Naive thymus-derived CD8-positive, alpha-beta T cell (primary cell): ENCODE measurements at regions of chr17 and their contacts with region 1.

Region 1: GRCh38 chr17:14300575-14301278 is at the start of gene HS3ST3B1:
- DNase-seq: peak; percentile 95 to 100 (median 99)
- ATAC-seq: peak; percentile 80 to 82
- H3K4me3 Mint-ChIP-seq: peak within 1 kb of the TSS; percentile 88 to 99 (median 97)
- H3K27ac Mint-ChIP-seq: peak within 1 kb of the TSS; percentile 88 to 97 (median 95)
- H3K4me1 Mint-ChIP-seq: peaks cover 43 to 73% (median 66%) of the 10 kb centered on the region in 4 donors
- H3K27me3 Mint-ChIP-seq: peaks cover 14 to 34% (median 30%) of the 10 kb centered on the region in 5 donors
- polyA plus RNA-seq, gene HS3ST3B1: 9.2 to 12.7 (median 11.8) TPM

Region 2: DNA sequence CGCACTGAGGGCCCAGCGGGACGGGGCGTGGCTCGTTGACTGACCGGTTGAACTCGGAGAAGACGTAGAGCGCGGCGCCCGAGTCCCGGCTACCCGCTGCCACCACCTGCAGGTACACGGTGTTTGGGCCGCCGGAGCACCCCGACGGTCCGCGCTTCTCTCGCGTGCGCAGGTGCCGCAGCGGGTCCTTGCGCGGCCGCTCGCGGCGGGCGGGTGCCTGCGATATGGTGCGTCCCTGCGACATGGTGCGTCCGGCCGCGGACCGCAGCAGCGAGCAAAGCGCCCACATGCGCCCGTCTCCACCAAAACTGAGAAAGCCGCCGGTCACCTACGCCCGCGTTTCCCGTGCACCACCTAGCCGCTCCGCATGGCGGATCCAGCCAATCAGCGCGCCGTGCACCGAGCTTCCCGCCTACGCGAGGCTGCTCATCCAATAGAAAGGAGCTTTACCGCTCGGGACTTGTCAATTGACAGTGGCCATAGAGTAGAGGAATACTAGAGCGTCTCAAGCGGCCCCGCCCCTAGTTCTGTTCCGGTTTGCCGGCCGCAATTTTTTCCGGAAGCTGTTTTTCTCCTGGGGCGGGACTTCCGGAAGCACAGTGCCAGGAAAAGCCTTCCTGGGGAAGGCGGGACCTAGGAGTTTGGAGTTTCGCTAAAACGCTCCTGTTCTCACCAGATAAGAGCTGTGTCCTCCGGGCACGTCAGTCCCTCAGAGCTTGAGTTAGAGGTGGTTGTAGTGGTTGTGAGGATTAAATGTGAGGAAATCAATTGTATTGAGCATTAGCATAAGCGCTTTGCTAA is 1282.9 kb before region 1 on chr17 and contains the start of gene ELAC2:
- POLR2A ChIA-PET with region 1: interaction called, 10 read pairs
- DNase-seq: peak; percentile 84 to 97 (median 96)
- ATAC-seq: peak; percentile 99
- H3K4me3 Mint-ChIP-seq: peak within 1 kb of the TSS; percentile 94 to 99 (median 98)
- H3K27ac Mint-ChIP-seq: peak within 1 kb of the TSS; percentile 91 to 99 (median 97)
- H3K4me1 Mint-ChIP-seq: peaks cover 13 to 37% (median 35%) of the 10 kb centered on the region in 4 donors
- H3K27me3 Mint-ChIP-seq: no peaks in the 10 kb centered on the region
- polyA plus RNA-seq, gene ELAC2: 37.8 to 60.3 (median 46.1) TPM

Region 3: DNA sequence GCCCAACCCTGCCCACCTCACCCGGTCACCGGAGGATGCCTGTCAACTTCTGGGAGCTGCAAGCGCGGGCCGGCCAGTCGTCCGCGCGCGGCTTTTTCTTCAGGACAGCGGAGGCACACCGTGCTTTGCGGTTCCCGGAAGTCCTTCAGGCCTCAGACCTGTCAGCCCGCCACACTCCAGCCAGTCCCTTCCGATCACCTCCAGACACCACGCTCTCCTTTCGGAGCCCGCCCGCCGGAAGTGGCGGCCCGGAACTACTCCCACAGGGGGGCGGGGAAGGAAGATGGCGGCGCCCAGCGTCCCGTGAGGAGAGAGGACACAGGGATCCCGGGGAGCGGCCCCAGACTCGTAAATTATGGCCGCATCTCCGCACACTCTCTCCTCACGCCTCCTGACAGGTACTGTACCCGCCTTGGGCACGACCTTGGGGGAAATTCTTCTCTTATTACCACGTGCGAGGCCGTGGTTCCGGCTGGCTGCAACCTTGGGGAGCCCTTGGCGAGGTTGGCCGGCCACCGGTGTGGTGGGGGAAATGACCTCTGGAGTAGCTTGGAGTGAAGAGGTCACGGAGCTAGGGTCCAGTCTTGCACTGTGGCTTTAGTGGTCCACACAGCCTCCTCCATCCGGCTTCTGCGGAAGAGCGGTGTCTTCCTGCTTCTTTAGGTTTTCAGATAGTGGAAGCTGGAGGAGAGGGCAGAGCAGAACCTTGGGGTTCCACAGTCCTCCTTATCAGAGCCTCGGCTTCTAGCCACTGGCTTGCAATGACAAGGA is 231.3 kb before region 1 on chr17 and contains the start of gene COX10:
- POLR2A ChIA-PET with region 1: interaction called, 16 read pairs
- DNase-seq: peak; percentile 68 to 90 (median 77)
- ATAC-seq: peak; percentile 98
- H3K4me3 Mint-ChIP-seq: peak within 1 kb of the TSS; percentile 92 to 97 (median 94)
- H3K27ac Mint-ChIP-seq: peak within 1 kb of the TSS; percentile 87 to 97 (median 96)
- H3K4me1 Mint-ChIP-seq: peaks cover 27 to 58% (median 48%) of the 10 kb centered on the region in 4 donors
- H3K27me3 Mint-ChIP-seq: no peaks in the 10 kb centered on the region
- polyA plus RNA-seq, gene COX10: 18.5 to 24.5 (median 23.3) TPM

Region 4: DNA sequence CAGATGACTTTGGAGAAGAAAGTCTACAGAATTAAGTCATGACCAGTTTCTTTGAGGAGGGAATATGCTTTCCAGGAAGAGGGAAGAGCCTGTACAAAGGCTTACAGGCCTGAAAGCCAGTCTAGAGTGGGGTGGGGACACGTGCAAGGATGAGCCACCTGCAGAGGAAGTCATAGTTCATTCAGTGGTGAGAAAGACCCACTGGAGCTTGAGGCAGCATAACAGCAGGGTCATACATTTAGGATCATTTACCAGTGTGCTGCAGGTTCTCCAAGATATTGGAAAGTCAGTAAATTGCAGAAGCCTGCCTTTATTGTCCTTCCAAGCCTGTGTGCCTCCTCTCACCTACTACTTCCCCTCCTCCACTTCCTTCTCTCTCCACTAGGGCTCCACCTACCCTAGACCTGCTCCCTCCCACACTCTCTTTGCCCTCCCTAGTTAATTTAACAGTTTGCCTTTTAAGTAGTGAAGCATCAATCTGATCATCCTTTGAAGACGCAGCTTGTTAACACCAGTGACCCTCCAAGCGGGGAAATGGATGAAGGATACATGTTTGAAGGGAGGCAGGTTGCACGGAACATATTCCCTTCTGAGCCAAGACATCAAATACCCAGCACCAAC is 104.2 kb before region 1 on chr17:
- POLR2A ChIA-PET with region 1: interaction called, 91 read pairs
- DNase-seq: peak in 1 of 10 donors; percentile 33
- ATAC-seq: no peak
- H3K4me3 Mint-ChIP-seq: peak overlapping the region; percentile 50 to 90 (median 81)
- H3K27ac Mint-ChIP-seq: peak overlapping the region; percentile 92 to 99 (median 96)
- H3K4me1 Mint-ChIP-seq: peaks cover 52 to 91% (median 86%) of the 10 kb centered on the region in 4 donors
- H3K27me3 Mint-ChIP-seq: no peaks in the 10 kb centered on the region

Region 5: GRCh38 chr17:14203388-14203787 is 97.3 kb before region 1 on chr17:
- POLR2A ChIA-PET with region 1: interaction called, 91 read pairs
- DNase-seq: peak in 7 of 10 donors; percentile 32 to 76 (median 54)
- ATAC-seq: peak; percentile 41 to 51
- H3K4me3 Mint-ChIP-seq: peak overlapping the region; percentile 13 to 70 (median 44)
- H3K27ac Mint-ChIP-seq: peak overlapping the region; percentile 86 to 100 (median 92)
- H3K4me1 Mint-ChIP-seq: peaks cover 59 to 93% (median 87%) of the 10 kb centered on the region in 4 donors
- H3K27me3 Mint-ChIP-seq: no peaks in the 10 kb centered on the region

Region 6: DNA sequence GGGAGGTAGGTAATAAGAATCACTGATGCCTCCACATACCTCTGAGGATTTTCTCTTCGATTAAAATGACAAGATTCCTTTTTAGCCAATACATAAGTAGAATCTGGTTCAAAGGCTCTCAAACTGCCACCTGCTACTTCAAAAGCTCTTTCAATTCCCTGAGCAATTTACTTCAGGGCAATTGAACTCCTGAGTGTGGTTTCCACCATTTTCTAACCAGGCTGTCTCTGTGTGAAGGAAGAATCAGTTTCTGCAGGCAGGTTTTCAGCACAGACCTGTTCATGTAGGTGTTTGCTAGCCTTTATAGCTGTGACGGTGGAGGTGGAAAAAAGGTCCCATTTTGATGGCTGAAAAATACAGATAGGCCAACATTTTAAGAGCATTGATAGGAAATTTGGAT is 18.0 kb before region 1 on chr17:
- POLR2A ChIA-PET with region 1: no interaction called
- DNase-seq: no peak
- ATAC-seq: no peak
- H3K4me3 Mint-ChIP-seq: no peak overlapping the region
- H3K27ac Mint-ChIP-seq: no peak overlapping the region
- H3K4me1 Mint-ChIP-seq: peaks cover 0 to 7% (median 0%) of the 10 kb centered on the region in 4 donors
- H3K27me3 Mint-ChIP-seq: peaks cover 5 to 29% (median 14%) of the 10 kb centered on the region in 5 donors

Region 7: DNA sequence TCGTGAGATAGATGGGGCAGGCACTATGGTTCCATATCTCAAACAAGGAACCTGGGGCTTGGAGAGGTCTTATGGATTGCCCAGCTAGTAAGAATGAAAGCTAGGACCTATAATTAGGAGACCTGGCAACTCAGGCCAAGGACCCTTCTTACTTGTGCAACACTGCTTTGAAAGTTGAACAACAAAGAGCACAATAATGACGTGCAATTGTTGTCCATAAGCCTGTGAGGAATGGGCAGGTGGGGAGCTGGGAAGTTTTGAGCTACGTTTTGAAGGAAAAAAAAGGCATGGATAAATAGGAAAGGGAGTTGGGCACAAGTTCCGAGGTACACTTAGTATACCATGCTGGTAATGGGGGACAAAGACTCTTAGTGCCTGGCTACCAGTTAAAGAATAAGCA is 104.5 kb after region 1 on chr17:
- POLR2A ChIA-PET with region 1: interaction called, 24 read pairs
- DNase-seq: no peak
- ATAC-seq: no peak
- H3K4me3 Mint-ChIP-seq: peak overlapping the region in 5 of 10 donors; percentile 34 to 70 (median 51)
- H3K27ac Mint-ChIP-seq: peak overlapping the region in 8 of 10 donors; percentile 4 to 79 (median 44)
- H3K4me1 Mint-ChIP-seq: peaks cover 18 to 39% (median 30%) of the 10 kb centered on the region in 4 donors
- H3K27me3 Mint-ChIP-seq: no peaks in the 10 kb centered on the region

Region 8: GRCh38 chr17:14427900-14428647 is 127.3 kb after region 1 on chr17:
- POLR2A ChIA-PET with region 1: interaction called, 101 read pairs
- DNase-seq: peak; percentile 9 to 76 (median 54)
- ATAC-seq: peak; percentile 96 to 99
- H3K4me3 Mint-ChIP-seq: peak overlapping the region; percentile 69 to 91 (median 83)
- H3K27ac Mint-ChIP-seq: peak overlapping the region; percentile 82 to 100 (median 94)
- H3K4me1 Mint-ChIP-seq: peaks cover 37 to 68% (median 64%) of the 10 kb centered on the region in 4 donors
- H3K27me3 Mint-ChIP-seq: no peaks in the 10 kb centered on the region